ENCODE measurements at regions of chr2 and their contacts with region 1.

Region 1: DNA sequence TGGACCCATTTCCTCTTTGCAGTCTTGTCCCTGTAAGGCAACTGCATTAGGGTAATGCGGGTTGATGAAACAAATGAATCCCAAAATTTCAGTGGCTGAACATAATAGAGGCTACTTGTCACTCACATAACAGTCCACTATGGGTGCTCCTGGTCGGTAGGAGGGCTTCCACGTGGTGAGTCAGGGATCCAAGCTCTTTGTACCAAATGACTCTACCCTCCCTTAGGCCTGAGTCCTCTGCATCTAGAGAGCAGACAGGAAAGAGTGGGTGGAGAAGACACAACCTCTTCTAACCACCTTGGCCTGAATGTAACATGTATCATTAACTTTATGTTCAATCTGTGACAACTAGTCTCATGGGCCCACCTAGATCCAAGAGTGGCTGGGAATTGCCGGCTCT is 86.2 kb upstream of the HAAO start:
- DNase-seq: peak; percentile 56
- ATAC-seq: peak; percentile 93
- H3K4me3 Mint-ChIP-seq: no peak overlapping the region
- H3K27ac Mint-ChIP-seq: peak overlapping the region; percentile 20
- H3K4me1 Mint-ChIP-seq: peaks cover 32% of the 10 kb centered on the region
- H3K27me3 Mint-ChIP-seq: no peaks in the 10 kb centered on the region

Region 2: DNA sequence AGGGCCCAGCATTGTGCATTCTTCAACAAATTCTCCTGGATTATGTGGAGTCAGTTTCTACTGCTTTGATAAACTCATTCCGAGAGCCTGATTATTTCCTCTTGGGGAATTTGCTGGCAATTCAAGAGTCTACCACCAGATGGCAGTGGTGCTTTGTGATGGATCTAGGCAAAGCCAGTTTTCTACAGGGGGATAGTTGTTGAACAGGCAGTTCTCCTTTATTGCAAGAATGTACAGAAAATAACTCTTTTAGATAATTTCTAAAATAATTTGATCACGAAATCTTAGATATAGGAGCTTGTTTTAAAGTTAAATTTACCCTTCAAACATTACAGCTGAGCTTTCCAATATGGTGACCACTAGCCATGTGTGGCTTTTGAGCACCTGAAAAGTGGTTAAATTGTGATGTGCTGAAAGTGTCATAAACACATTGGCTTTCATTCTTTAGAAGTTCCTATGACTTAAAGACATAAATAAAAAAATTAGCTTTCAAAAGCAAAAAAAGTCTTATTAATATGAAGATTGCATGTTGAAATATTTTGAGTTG is 19.5 kb before region 1 on chr2:
- CTCF ChIA-PET with region 1: interaction called, 14 read pairs
- POLR2A ChIA-PET with region 1: no interaction called
- intact Hi-C with region 1: no loop called
- DNase-seq: peak; percentile 86
- ATAC-seq: peak; percentile 69
- H3K4me3 Mint-ChIP-seq: no peak overlapping the region
- H3K27ac Mint-ChIP-seq: no peak overlapping the region
- H3K4me1 Mint-ChIP-seq: peaks cover 5% of the 10 kb centered on the region
- H3K27me3 Mint-ChIP-seq: no peaks in the 10 kb centered on the region